A673 (cell line): ENCODE measurements at regions of chr5 and their contacts with region 1.

Region 1: GRCh38 chr5:157130925-157131324 is 11.7 kb downstream of the MED7 start:
- DNase-seq: no peak
- H3K4me3 ChIP-seq: no peak overlapping the region
- H3K27ac ChIP-seq: no peak overlapping the region
- H3K4me1 ChIP-seq: no peaks in the 10 kb centered on the region
- H3K27me3 ChIP-seq: no peaks in the 10 kb centered on the region
- CTCF ChIP-seq: no peak

Region 2: DNA sequence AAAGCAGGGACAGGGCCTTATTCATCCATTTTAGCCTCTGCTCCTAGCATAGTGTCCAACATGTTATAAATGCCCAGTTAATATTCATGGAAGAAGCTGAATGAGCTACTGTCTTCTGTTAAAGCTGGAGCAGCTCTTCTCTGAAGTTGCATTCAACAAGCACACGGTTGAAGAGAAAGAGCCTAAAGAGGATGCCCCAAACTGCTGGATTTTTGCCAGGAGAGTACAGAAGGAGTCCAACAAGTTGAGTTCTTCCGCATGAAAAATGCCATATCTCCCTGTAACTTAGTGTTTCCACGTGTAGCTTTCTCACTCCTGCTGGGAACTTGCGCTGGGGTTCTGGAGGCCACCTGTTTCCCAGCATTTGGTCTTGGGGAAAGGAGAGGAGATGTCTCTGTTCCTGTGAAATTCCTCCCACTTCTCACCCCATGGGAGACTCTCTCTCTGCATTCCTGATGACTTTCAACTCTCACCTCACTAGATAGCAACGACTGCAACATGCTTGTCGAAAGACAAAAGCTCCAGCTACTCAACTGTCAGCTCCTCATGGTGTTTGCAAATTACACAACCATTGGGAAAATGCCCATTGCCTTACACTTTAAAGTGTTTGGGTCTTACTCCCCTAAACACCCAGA is 1994.6 kb before region 1 on chr5:
- CTCF ChIA-PET with region 1: no interaction called
- POLR2A ChIA-PET with region 1: no interaction called
- intact Hi-C with region 1: loop called (anchors 5 kb)
- DNase-seq: no peak
- H3K4me3 ChIP-seq: no peak overlapping the region
- H3K27ac ChIP-seq: no peak overlapping the region
- H3K4me1 ChIP-seq: no peaks in the 10 kb centered on the region
- H3K27me3 ChIP-seq: no peaks in the 10 kb centered on the region
- CTCF ChIP-seq: no peak

Region 3: DNA sequence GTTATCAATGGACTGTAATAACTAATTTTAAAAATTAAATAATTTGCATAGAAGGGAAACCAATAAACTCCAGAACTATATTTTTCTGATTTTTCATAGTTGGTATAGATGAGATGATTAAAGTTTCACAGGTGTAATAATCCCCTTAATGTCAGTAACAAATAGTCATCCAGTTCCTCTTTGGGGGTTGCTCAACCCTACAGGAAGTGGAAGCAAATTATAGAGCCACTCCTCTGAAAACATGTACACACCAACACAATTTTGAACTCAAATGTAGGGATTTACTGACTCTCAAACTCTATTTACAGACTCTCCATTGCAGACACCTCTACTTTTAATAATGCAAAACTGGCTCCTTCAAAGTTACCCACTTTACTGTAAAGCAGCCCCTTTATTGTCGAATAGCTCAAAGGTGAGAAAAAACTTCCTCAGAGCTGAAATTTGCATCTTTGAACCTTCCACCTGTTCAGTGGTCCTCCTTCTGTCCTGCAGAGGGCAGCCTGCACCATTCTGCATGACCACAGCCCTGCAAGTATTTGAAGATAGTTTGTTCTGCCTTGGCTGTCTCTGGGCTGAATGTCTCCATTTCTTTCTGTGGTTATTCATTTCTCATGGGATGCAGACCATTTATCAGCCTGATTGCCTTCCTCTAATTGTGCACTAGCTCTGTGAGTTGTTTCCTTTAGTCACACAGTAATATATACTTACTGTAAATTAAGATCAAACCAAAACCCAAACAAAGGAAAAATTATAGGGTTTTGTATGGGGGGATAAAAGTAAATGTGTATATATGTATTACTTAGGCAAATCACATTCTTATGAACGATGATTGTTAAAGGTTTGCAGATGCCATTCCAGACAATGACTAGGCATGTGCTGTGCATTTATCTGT is 1187.2 kb before region 1 on chr5:
- CTCF ChIA-PET with region 1: no interaction called
- POLR2A ChIA-PET with region 1: no interaction called
- intact Hi-C with region 1: loop called (anchors 10 kb)
- DNase-seq: peak; percentile 30
- H3K4me3 ChIP-seq: no peak overlapping the region
- H3K27ac ChIP-seq: no peak overlapping the region
- H3K4me1 ChIP-seq: no peaks in the 10 kb centered on the region
- H3K27me3 ChIP-seq: no peaks in the 10 kb centered on the region
- CTCF ChIP-seq: peak; percentile 59

Region 4: DNA sequence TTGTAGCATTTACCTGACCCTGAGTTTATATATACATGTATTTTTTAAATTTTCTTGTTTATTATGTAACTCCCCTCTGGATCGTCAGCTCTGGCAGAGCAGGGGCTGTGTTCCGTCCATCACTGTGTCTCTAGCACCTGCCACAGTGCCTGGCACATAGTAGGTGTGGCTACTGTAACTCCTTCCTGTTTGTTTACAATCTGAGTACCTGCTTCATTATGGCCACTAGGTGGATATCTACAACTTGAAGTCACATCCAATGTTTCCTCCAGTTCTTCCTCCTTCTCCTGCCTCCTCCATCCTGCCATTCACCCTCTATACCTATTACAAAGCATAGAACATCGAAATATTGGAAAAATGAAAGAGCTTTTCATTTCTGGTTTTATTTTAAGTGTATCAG is 295.0 kb before region 1 on chr5:
- CTCF ChIA-PET with region 1: no interaction called
- POLR2A ChIA-PET with region 1: no interaction called
- intact Hi-C with region 1: loop called (anchors 5 kb)
- DNase-seq: no peak
- H3K4me3 ChIP-seq: no peak overlapping the region
- H3K27ac ChIP-seq: no peak overlapping the region
- H3K4me1 ChIP-seq: no peaks in the 10 kb centered on the region
- H3K27me3 ChIP-seq: no peaks in the 10 kb centered on the region
- CTCF ChIP-seq: peak; percentile 15; the same call in 1 of the 2 replicates

Region 5: GRCh38 chr5:156879665-156880285 is 251.2 kb before region 1 on chr5:
- CTCF ChIA-PET with region 1: no interaction called
- POLR2A ChIA-PET with region 1: no interaction called
- intact Hi-C with region 1: no loop called
- DNase-seq: no peak
- H3K4me3 ChIP-seq: no peak overlapping the region
- H3K27ac ChIP-seq: no peak overlapping the region
- H3K4me1 ChIP-seq: no peaks in the 10 kb centered on the region
- H3K27me3 ChIP-seq: peaks cover 3% of the 10 kb centered on the region
- CTCF ChIP-seq: no peak

Region 6: DNA sequence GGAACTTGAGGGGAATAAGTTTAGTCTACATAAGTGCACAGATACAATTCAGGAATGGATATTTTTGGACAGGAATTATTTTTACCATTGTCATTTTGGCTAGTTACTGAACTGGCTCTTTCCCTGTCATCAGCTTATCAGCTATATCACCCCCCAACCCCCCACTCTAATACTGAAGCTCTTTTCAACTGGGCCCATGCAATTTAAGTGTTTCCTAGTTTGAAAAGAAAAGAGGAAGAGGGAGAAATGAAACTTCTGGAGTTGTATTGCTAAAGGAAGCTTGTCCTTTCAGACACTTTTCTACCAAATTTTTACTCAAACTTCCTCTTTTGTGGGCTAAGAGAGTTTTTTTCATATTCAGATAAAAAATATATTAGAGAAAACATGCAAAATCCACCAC is 149.4 kb before region 1 on chr5:
- CTCF ChIA-PET with region 1: no interaction called
- POLR2A ChIA-PET with region 1: interaction called, 15 read pairs
- intact Hi-C with region 1: no loop called
- DNase-seq: no peak
- H3K4me3 ChIP-seq: no peak overlapping the region
- H3K27ac ChIP-seq: no peak overlapping the region
- H3K4me1 ChIP-seq: no peaks in the 10 kb centered on the region
- H3K27me3 ChIP-seq: no peaks in the 10 kb centered on the region
- CTCF ChIP-seq: no peak